ENCODE measurements at regions of chr17 and their contacts with region 1.

Region 1: DNA sequence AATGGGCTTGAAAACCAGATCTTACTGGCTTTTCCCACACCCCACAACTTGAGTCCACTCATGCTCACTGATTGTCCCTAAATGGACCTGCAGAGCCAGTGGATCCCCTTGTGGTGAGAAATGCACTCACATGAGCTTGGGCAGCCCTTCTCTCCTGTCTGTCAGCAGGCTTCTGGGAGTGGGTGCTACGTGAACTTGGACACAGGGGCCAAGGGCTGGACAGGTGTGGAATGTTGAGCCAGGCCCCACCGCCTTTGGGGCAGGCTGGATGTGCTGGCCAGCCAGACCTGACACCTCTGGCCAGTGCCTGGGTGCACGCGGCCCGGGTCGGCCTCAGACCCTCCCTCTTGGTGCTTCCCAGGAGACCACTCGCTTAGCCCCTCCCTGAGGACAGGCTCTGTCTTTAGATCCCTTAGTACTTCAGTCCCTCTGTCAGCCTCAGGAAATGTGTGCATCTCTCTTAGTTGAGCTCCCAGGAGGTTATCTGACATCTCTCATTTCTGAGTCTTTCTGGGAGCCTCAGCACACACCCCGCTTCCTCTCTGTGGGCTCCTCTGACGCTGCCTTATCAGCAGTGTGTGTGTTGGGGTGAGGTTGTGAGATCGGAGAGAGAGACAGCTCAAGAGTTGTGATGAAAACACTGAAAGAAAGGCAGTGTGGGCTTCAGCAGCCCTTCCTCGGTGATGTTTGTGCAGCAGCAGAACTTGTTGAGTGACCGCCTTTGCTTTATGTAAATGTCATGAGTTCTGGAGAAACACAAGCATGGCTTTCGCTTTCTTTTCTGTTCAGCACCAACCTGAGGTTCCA is 117.0 kb downstream of the RAB11FIP4 start:
- DNase-seq: no peak
- ATAC-seq: peak; percentile 77
- H3K4me3 Mint-ChIP-seq: peak overlapping the region; percentile 88
- H3K27ac Mint-ChIP-seq: peak overlapping the region; percentile 96
- H3K4me1 Mint-ChIP-seq: peaks cover 65% of the 10 kb centered on the region
- H3K27me3 Mint-ChIP-seq: no peaks in the 10 kb centered on the region
- CTCF ChIP-seq: no peak

Region 2: GRCh38 chr17:31226373-31226772 is 282.1 kb before region 1 on chr17:
- CTCF ChIA-PET with region 1: no interaction called
- POLR2A ChIA-PET with region 1: no interaction called
- intact Hi-C with region 1: no loop called
- DNase-seq: no peak
- ATAC-seq: no peak
- H3K4me3 Mint-ChIP-seq: no peak overlapping the region
- H3K27ac Mint-ChIP-seq: no peak overlapping the region
- H3K4me1 Mint-ChIP-seq: peaks cover 16% of the 10 kb centered on the region
- H3K27me3 Mint-ChIP-seq: no peaks in the 10 kb centered on the region
- CTCF ChIP-seq: no peak

Region 3: GRCh38 chr17:31394544-31394943 is 113.9 kb before region 1 on chr17:
- CTCF ChIA-PET with region 1: interaction called, 5 read pairs
- POLR2A ChIA-PET with region 1: no interaction called
- intact Hi-C with region 1: loop called (anchors 5 kb)
- DNase-seq: peak; percentile 16
- ATAC-seq: peak; percentile 32
- H3K4me3 Mint-ChIP-seq: no peak overlapping the region
- H3K27ac Mint-ChIP-seq: no peak overlapping the region
- H3K4me1 Mint-ChIP-seq: peaks cover 14% of the 10 kb centered on the region
- H3K27me3 Mint-ChIP-seq: peaks cover 47% of the 10 kb centered on the region
- CTCF ChIP-seq: no peak